Naive thymus-derived CD4-positive, alpha-beta T cell (primary cell): ENCODE measurements at regions of chr12 and their contacts with region 1.

Region 1: DNA sequence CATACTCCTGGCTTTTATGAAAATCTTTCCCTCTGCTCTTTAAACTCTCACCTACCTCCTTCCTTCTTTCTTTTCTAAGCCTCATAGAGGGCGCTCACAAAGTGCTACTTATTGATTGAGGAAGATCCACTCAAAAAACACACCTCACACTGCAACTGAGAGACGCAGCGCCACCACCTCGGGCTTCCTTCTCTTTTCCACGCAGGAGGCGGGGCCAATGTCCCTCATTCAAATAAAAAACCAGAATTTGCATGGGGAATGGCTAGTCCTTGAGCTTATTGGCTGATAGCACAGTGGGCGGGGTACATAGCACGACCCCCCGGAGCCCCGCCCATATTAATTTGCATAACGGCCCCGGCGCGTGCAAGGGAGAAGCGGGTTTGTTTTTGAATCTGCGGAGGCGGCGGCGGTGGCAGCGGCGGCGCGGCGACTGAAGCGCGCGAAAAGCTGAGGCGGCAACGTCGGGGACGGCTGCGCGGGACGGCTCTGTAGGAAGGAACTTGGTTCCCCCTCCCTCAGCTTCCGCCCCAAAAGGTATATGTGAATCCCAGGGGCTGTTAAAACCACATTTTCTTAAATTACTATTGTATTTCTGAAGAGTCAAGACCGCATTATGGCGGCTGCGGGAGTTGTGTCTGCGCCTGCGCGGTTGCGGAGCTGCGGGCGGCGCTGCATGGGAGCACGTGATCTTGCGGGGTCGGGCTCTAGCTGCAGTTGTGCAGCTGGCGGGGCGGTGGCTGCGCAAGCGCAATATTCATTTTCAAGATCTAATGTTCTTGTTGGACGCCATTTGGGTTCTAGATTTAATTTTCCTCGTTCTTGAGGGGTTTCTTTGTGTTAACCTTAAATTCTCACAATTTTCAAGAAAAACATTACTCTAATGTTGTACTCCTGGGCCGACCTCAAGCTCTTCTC is at the start of gene ATF7IP:
- DNase-seq: peak; percentile 91 to 98 (median 97)
- ATAC-seq: peak; percentile 93
- H3K4me3 ChIP-seq: peak within 1 kb of the TSS; percentile 83
- H3K4me3 Mint-ChIP-seq: peak within 1 kb of the TSS; percentile 78 to 97 (median 88)
- H3K27ac ChIP-seq: peak within 1 kb of the TSS; percentile 84
- H3K27ac Mint-ChIP-seq: peak within 1 kb of the TSS; percentile 88 to 98 (median 94)
- H3K4me1 ChIP-seq: peaks cover 13 to 20% of the 10 kb centered on the region in 2 donors
- H3K4me1 Mint-ChIP-seq: peaks cover 21 to 52% (median 34%) of the 10 kb centered on the region in 7 donors
- H3K27me3 ChIP-seq: no peaks in the 10 kb centered on the region
- H3K27me3 Mint-ChIP-seq: peaks cover 0 to 2% (median 0%) of the 10 kb centered on the region in 5 donors
- total RNA-seq, gene ATF7IP: 113 to 181 (median 144) TPM

Region 2: GRCh38 chr12:12724661-12725545 is 1640.6 kb before region 1 on chr12:
- CTCF ChIA-PET with region 1: no interaction called
- POLR2A ChIA-PET with region 1: no interaction called
- intact Hi-C with region 1: loop called in 1 of 2 experiments (anchors 2 kb)
- DNase-seq: peak; percentile 78 to 97 (median 92)
- ATAC-seq: peak; percentile 77
- H3K4me3 ChIP-seq: peak overlapping the region; percentile 53
- H3K4me3 Mint-ChIP-seq: peak overlapping the region; percentile 87 to 98 (median 94)
- H3K27ac ChIP-seq: peak overlapping the region; percentile 99
- H3K27ac Mint-ChIP-seq: peak overlapping the region; percentile 96 to 99 (median 97)
- H3K4me1 ChIP-seq: peaks cover 28% of the 10 kb centered on the region in 2 donors
- H3K4me1 Mint-ChIP-seq: peaks cover 23 to 64% (median 56%) of the 10 kb centered on the region in 7 donors
- H3K27me3 ChIP-seq: no peaks in the 10 kb centered on the region
- H3K27me3 Mint-ChIP-seq: peaks cover 0 to 7% (median 0%) of the 10 kb centered on the region in 5 donors

Region 3: DNA sequence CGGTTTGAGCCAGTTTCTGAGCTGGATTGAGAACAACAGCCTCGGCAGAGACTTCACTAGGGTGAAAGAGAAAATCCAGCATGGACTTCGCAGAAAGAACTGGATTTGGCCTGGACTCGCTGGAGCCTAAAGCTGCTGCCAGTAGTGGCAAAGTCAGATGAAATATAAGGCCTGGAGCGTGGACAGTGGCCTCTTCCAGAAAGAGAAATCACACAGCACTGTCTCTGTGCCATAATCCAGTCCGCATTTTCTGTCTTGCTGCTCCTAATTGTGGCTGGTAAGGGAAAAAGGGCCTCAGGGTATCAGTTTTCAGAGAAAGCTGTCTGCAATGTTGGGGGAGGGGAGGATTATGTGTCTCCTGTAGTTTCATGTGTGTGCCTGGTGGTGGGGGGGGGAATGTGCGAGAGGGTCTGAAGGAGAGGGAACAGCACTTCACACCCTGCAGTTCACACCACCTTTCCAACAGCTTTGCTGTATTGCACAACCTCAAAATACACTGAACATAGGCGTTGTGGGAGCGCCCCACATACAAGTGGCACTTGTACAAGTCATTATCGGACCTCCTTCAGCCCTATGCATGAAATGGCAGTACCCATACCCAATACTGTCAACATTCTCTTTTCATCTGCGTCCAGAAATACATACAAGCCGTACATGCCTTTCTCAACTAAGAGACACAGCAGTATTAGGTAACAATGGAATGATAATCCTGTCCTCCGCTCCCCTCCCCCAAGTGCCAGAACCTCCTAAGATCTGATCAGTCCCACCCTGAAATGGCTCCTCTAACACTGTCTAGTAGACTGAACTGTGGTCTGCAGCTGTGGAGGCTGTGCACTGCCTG is 107.6 kb before region 1 on chr12:
- CTCF ChIA-PET with region 1: interaction called, 16 read pairs
- POLR2A ChIA-PET with region 1: interaction called, 43 read pairs
- intact Hi-C with region 1: loop called (anchors 1 kb)
- DNase-seq: peak; percentile 49 to 85 (median 79)
- ATAC-seq: peak; percentile 72
- H3K4me3 ChIP-seq: peak overlapping the region; percentile 31
- H3K4me3 Mint-ChIP-seq: peak overlapping the region; percentile 67 to 81 (median 77)
- H3K27ac ChIP-seq: peak overlapping the region; percentile 65
- H3K27ac Mint-ChIP-seq: peak overlapping the region; percentile 89 to 99 (median 98)
- H3K4me1 ChIP-seq: peaks cover 37 to 38% of the 10 kb centered on the region in 2 donors
- H3K4me1 Mint-ChIP-seq: peaks cover 39 to 66% (median 61%) of the 10 kb centered on the region in 7 donors
- H3K27me3 ChIP-seq: no peaks in the 10 kb centered on the region
- H3K27me3 Mint-ChIP-seq: no peaks in the 10 kb centered on the region

Region 4: DNA sequence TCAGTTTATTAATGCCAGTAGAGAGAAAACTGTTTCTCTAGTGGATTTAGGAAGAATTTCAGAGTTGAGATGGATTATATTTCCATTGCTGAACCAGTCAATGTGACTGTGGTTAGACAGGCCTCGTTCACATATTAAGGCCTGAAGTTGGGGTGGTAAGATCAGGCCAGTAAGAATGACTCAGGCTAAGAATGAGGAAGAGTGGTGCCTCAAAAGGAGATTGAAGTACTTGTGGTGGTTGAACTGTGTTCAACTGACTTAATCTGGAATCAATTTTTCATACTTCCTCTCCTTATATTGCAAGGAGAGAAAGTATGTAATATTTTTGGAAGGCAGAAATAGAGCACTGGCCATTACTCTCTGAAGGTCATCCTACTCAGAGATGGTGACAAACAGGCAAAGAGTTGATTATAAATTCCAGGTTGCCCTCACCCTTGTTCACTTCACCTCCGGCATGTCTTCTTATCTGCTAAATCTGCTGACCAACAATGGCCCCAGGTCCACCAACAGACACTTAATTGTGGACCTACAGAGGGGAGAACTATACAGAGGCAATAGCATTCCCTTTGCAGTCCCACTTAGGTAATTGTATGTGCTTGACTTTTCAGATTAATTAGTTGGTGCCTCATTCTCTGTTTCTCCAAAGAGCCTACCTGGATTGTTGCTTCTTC is 37.7 kb before region 1 on chr12:
- CTCF ChIA-PET with region 1: no interaction called
- POLR2A ChIA-PET with region 1: no interaction called
- intact Hi-C with region 1: no loop called
- DNase-seq: no peak
- ATAC-seq: peak; percentile 84
- H3K4me3 ChIP-seq: no peak overlapping the region
- H3K4me3 Mint-ChIP-seq: no peak overlapping the region
- H3K27ac ChIP-seq: no peak overlapping the region
- H3K27ac Mint-ChIP-seq: no peak overlapping the region
- H3K4me1 ChIP-seq: no peaks in the 10 kb centered on the region
- H3K4me1 Mint-ChIP-seq: peaks cover 0 to 2% (median 0%) of the 10 kb centered on the region in 7 donors
- H3K27me3 ChIP-seq: no peaks in the 10 kb centered on the region
- H3K27me3 Mint-ChIP-seq: no peaks in the 10 kb centered on the region

Region 5: DNA sequence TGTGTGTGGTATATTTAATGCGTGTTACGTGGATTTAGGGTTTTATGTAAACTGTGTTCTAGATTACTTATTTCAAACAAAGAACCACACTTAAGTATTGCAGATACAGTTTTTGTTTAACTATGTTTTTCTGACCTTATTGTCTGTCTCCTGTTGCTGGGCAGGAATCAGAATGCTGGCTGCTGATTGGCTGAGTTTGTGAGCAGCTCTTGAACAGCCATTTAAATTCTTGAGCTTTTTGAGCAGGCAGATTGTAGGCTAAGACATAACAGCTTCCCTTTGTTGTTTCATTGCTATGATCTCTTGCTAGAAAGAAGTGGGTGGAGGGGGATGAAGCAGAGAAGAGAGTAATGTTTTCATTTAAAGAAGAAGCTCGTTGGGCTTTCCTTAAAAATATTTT is 52.2 kb after region 1 on chr12:
- CTCF ChIA-PET with region 1: interaction called, 31 read pairs
- POLR2A ChIA-PET with region 1: interaction called, 95 read pairs
- intact Hi-C with region 1: loop called (anchors 1 kb)
- DNase-seq: peak in 8 of 9 donors; percentile 26 to 88 (median 82)
- ATAC-seq: peak; percentile 80
- H3K4me3 ChIP-seq: no peak overlapping the region
- H3K4me3 Mint-ChIP-seq: peak overlapping the region; percentile 73 to 88 (median 83)
- H3K27ac ChIP-seq: peak overlapping the region; percentile 58
- H3K27ac Mint-ChIP-seq: peak overlapping the region; percentile 76 to 94 (median 87)
- H3K4me1 ChIP-seq: peaks cover 37 to 50% of the 10 kb centered on the region in 2 donors
- H3K4me1 Mint-ChIP-seq: peaks cover 40 to 85% (median 76%) of the 10 kb centered on the region in 7 donors
- H3K27me3 ChIP-seq: no peaks in the 10 kb centered on the region
- H3K27me3 Mint-ChIP-seq: no peaks in the 10 kb centered on the region

Region 6: DNA sequence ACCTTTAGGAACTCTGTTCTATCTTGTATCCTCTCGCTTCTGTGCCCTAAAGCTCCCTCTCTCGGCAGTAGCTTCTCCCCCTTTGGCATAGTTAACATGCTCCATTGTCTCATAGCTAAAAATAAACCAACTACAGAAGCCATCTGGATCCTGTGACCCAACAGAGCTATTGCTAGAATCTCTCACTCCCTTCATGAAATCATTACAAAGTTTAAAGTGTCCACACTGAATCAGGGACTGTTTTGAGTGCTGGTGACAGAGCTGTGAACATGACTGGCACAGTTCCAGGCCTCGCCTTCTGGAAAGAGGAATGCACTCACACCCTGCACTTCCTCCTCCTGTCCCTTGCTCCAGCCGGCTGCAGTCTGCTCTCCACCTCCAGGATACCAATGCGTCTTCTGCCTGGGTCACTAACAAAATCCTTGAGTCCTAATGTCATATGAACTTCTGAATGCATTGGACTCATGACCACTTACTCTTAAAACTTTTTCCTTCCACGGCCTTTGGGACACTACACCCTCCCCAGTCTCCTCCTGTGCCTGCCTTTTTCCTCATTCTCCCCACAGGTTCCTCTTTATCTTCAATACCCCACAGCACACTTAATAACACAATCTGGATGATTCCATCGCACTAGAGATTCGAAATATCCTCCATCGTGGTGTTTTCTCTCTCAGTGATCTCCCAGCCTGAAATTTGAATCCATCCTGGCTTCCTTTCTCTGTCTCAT is 188.9 kb after region 1 on chr12:
- CTCF ChIA-PET with region 1: no interaction called
- POLR2A ChIA-PET with region 1: no interaction called
- intact Hi-C with region 1: no loop called
- DNase-seq: no peak
- ATAC-seq: peak; percentile 77
- H3K4me3 ChIP-seq: no peak overlapping the region
- H3K4me3 Mint-ChIP-seq: no peak overlapping the region
- H3K27ac ChIP-seq: no peak overlapping the region
- H3K27ac Mint-ChIP-seq: no peak overlapping the region
- H3K4me1 ChIP-seq: no peaks in the 10 kb centered on the region
- H3K4me1 Mint-ChIP-seq: peaks cover 0 to 8% (median 6%) of the 10 kb centered on the region in 7 donors
- H3K27me3 ChIP-seq: no peaks in the 10 kb centered on the region
- H3K27me3 Mint-ChIP-seq: peaks cover 0 to 7% (median 4%) of the 10 kb centered on the region in 5 donors

Region 7: DNA sequence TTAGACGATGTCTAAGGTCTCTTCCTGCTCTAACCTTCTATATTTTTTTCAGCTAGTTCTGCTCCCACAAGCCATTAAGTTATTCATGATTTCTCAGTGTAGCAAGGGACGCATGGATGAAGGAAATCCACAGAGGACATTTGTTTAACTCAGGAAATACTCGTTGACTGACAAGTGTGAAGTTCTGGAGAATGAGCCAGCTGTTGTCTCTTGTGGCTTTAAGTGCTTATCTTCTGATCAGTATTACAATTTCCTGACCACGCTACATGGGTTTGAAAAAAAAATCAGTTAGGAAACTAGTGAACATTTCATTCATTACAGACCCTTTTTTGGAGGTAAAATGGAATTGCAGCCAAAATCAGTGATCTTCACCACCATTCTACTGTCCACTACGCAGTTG is 277.7 kb after region 1 on chr12:
- CTCF ChIA-PET with region 1: no interaction called
- POLR2A ChIA-PET with region 1: no interaction called
- intact Hi-C with region 1: loop called (anchors 5 kb)
- DNase-seq: peak in 6 of 9 donors; percentile 29 to 52 (median 42)
- ATAC-seq: peak; percentile 46
- H3K4me3 ChIP-seq: no peak overlapping the region
- H3K4me3 Mint-ChIP-seq: peak overlapping the region; percentile 35 to 79 (median 71)
- H3K27ac ChIP-seq: no peak overlapping the region
- H3K27ac Mint-ChIP-seq: peak overlapping the region; percentile 8 to 83 (median 54)
- H3K4me1 ChIP-seq: peaks cover 14 to 21% of the 10 kb centered on the region in 2 donors
- H3K4me1 Mint-ChIP-seq: peaks cover 15 to 26% (median 24%) of the 10 kb centered on the region in 7 donors
- H3K27me3 ChIP-seq: no peaks in the 10 kb centered on the region
- H3K27me3 Mint-ChIP-seq: peaks cover 0 to 9% (median 0%) of the 10 kb centered on the region in 5 donors

Region 8: GRCh38 chr12:14948672-14949071 is 583.1 kb after region 1 on chr12:
- CTCF ChIA-PET with region 1: no interaction called
- POLR2A ChIA-PET with region 1: interaction called, 6 read pairs
- intact Hi-C with region 1: loop called (anchors 2 kb)
- DNase-seq: peak in 8 of 9 donors; percentile 34 to 87 (median 81)
- ATAC-seq: peak; percentile 88
- H3K4me3 ChIP-seq: peak overlapping the region; percentile 47
- H3K4me3 Mint-ChIP-seq: peak overlapping the region; percentile 72 to 97 (median 90)
- H3K27ac ChIP-seq: peak overlapping the region; percentile 96
- H3K27ac Mint-ChIP-seq: peak overlapping the region; percentile 87 to 99 (median 97)
- H3K4me1 ChIP-seq: peaks cover 77 to 79% of the 10 kb centered on the region in 2 donors
- H3K4me1 Mint-ChIP-seq: peaks cover 69 to 95% (median 91%) of the 10 kb centered on the region in 7 donors
- H3K27me3 ChIP-seq: no peaks in the 10 kb centered on the region
- H3K27me3 Mint-ChIP-seq: no peaks in the 10 kb centered on the region

Region 9: GRCh38 chr12:15789220-15790171 is 1423.9 kb after region 1 on chr12 and contains the start of gene EPS8:
- CTCF ChIA-PET with region 1: no interaction called
- POLR2A ChIA-PET with region 1: interaction called, 3 read pairs
- intact Hi-C with region 1: loop called in 1 of 2 experiments (anchors 2 kb)
- DNase-seq: peak; percentile 82 to 92 (median 91)
- ATAC-seq: peak; percentile 95
- H3K4me3 ChIP-seq: peak within 1 kb of the TSS; percentile 78
- H3K4me3 Mint-ChIP-seq: peak within 1 kb of the TSS; percentile 91 to 99 (median 96)
- H3K27ac ChIP-seq: peak within 1 kb of the TSS; percentile 63
- H3K27ac Mint-ChIP-seq: peak within 1 kb of the TSS; percentile 58 to 97 (median 84)
- H3K4me1 ChIP-seq: peaks cover 0 to 7% of the 10 kb centered on the region in 2 donors
- H3K4me1 Mint-ChIP-seq: peaks cover 10 to 17% (median 15%) of the 10 kb centered on the region in 7 donors
- H3K27me3 ChIP-seq: peaks cover 0 to 11% of the 10 kb centered on the region in 2 donors
- H3K27me3 Mint-ChIP-seq: peaks cover 26 to 74% (median 49%) of the 10 kb centered on the region in 5 donors
- total RNA-seq, gene EPS8: 2.0 to 3.1 (median 2.7) TPM